Ovary (tissue), 10 donors: ENCODE measurements at regions of chr1 and their contacts with region 1.

Region 1: GRCh38 chr1:55639051-55639450 is 423.9 kb upstream of the USP24 start:
- DNase-seq: no peak
- H3K4me3 ChIP-seq: no peak overlapping the region
- H3K27ac ChIP-seq: no peak overlapping the region
- H3K4me1 ChIP-seq: no peaks in the 10 kb centered on the region
- H3K27me3 ChIP-seq: no peaks in the 10 kb centered on the region
- CTCF ChIP-seq: no peak
- EP300 ChIP-seq: no peak
- POLR2A ChIP-seq: no peak

Region 2: DNA sequence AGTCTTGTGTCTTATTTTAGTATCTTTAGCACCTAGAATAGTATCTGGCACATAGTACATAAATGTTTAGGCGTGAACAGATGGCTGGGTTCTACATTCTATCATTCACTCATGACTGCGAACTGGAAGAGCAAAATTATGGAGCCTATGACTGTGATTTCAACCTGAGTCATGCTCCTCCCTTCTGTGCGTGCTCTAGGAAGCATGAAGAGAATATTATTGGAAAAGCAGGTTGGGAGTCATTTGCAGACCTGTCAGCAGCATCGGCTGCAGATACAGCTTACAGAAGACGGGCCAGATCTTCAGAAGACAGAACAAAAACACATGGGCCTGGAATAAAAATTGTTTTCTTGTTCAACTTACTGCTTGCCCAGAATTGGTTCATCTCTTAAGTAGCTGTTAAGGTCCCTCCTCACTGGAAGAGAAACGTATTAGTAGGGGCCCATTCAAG is 79.9 kb before region 1 on chr1:
- intact Hi-C with region 1: no loop called
- DNase-seq: no peak
- H3K4me3 ChIP-seq: no peak overlapping the region
- H3K27ac ChIP-seq: no peak overlapping the region
- H3K4me1 ChIP-seq: peaks cover 6% of the 10 kb centered on the region
- H3K27me3 ChIP-seq: no peaks in the 10 kb centered on the region
- CTCF ChIP-seq: no peak
- EP300 ChIP-seq: no peak
- POLR2A ChIP-seq: no peak

Region 3: DNA sequence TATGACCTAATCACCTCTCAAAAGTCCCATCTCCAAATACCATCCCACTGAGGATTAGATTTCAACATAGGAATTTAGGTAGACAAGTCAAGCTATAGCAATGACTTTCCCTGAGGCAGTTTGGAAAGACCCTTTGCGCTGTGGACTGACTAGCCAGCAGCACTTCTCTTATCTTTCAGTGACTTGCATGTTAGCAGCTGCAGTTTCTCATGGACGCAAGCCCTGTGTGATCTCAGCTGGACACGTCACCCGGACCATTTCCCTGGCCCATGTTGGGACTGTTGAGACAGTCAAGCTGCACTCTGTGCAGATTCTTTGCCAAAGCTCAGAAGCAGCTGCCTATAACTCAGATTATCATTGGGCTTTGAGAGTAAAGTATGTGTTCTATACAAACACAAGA is 15.7 kb before region 1 on chr1:
- intact Hi-C with region 1: loop called in 1 of 4 experiments (anchors 1 kb)
- DNase-seq: peak; percentile 44 to 79 (median 63)
- H3K4me3 ChIP-seq: no peak overlapping the region
- H3K27ac ChIP-seq: no peak overlapping the region
- H3K4me1 ChIP-seq: peaks cover 2% of the 10 kb centered on the region
- H3K27me3 ChIP-seq: no peaks in the 10 kb centered on the region
- CTCF ChIP-seq: no peak
- EP300 ChIP-seq: no peak
- POLR2A ChIP-seq: no peak

Region 4: GRCh38 chr1:55775007-55775406 is 136.0 kb after region 1 on chr1:
- intact Hi-C with region 1: no loop called
- DNase-seq: no peak
- H3K4me3 ChIP-seq: no peak overlapping the region
- H3K27ac ChIP-seq: no peak overlapping the region
- H3K4me1 ChIP-seq: no peaks in the 10 kb centered on the region
- H3K27me3 ChIP-seq: no peaks in the 10 kb centered on the region
- CTCF ChIP-seq: no peak
- EP300 ChIP-seq: no peak
- POLR2A ChIP-seq: no peak